ENCODE measurements at regions of chr11 and their contacts with region 1.

Region 1: DNA sequence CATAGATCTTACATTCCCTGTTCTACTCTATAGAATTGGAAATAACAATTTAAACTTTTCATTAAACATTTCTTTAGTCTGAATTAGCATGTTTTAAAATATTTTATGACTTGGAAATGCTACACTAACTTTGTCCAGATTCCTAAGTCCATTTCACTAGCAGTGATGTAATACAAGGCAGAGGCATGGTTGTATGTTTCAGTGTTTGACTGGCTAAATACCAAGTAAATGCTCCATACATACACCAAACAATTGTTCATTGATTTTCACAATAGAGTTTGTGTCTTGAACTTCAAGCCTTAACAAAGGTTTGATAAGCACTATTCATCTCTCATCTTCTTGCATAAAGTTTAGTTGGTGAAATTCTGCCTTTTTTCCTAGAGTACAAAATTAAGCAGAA is 13.5 kb downstream of the ZBED5 start:
- DNase-seq: no peak
- H3K4me3 ChIP-seq: no peak overlapping the region
- H3K27ac ChIP-seq: no peak overlapping the region
- H3K4me1 ChIP-seq: no peaks in the 10 kb centered on the region
- H3K27me3 ChIP-seq: no peaks in the 10 kb centered on the region
- CTCF ChIP-seq: no peak
- EP300 ChIP-seq: no peak
- POLR2A ChIP-seq: no peak

Region 2: DNA sequence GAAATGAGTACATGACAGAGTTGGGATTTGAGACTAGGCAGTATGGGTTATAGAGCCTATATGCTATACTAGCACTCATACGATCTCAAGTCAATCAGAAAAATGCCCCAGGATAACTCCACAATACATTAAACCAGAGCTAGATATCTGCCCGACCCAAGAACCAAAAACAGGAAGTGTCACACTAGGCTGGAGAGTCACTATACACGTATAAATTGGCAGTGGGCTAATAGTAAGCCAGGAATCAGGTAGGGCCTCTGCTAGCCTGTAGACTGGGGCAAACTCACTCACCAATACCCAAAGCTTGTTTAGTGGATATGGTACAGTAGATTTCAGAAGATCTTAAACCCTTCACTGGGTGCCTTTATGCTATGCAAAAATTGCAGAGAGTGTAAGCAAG is 19.5 kb before region 1 on chr11:
- intact Hi-C with region 1: no loop called
- DNase-seq: no peak
- H3K4me3 ChIP-seq: no peak overlapping the region
- H3K27ac ChIP-seq: no peak overlapping the region
- H3K4me1 ChIP-seq: no peaks in the 10 kb centered on the region
- H3K27me3 ChIP-seq: no peaks in the 10 kb centered on the region
- CTCF ChIP-seq: no peak
- EP300 ChIP-seq: no peak
- POLR2A ChIP-seq: no peak

Region 3: GRCh38 chr11:10920205-10920604 is 75.8 kb after region 1 on chr11:
- intact Hi-C with region 1: loop called in 1 of 4 experiments (anchors 10 kb)
- DNase-seq: no peak
- H3K4me3 ChIP-seq: no peak overlapping the region
- H3K27ac ChIP-seq: no peak overlapping the region
- H3K4me1 ChIP-seq: no peaks in the 10 kb centered on the region
- H3K27me3 ChIP-seq: no peaks in the 10 kb centered on the region
- CTCF ChIP-seq: no peak
- EP300 ChIP-seq: no peak
- POLR2A ChIP-seq: no peak

Measured in ovary (tissue), 10 donors.